ENCODE measurements at regions of chr3 and their contacts with region 1.

Region 1: DNA sequence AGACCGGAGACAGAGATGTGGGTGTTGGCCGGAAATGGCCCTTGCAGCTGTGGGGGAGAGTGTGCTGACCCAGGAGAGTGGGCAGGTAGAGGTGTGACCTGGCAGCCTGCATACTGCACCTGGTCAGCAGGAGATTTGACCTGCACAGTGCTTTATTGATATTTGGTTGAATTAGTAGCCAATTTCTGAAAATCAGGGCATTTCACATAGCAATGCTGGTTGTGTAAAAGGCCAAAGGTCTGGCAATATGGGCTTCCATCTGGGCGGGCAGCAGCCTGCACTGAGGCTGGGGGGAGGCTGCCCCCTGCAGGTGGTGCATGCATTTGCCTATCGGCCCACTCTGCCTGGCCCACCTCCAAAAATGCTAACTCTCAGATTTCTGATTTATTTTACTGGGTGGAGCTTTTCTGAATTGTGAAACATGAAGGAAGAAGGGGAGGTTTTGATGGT is 9.4 kb upstream of the MGLL start:
- DNase-seq: peak in 1 of 2 experiments; percentile 82
- H3K4me3 ChIP-seq: no peak overlapping the region
- H3K27ac ChIP-seq: no peak overlapping the region
- H3K4me1 ChIP-seq: no peaks in the 10 kb centered on the region
- H3K27me3 ChIP-seq: no peaks in the 10 kb centered on the region; a peak in 1 of 7 replicates
- CTCF ChIP-seq: peak; percentile 90 to 96 (median 94)
- EP300 ChIP-seq: no peak
- POLR2A ChIP-seq: no peak
- RAD21 ChIP-seq: peak; percentile 94 to 98

Region 2: DNA sequence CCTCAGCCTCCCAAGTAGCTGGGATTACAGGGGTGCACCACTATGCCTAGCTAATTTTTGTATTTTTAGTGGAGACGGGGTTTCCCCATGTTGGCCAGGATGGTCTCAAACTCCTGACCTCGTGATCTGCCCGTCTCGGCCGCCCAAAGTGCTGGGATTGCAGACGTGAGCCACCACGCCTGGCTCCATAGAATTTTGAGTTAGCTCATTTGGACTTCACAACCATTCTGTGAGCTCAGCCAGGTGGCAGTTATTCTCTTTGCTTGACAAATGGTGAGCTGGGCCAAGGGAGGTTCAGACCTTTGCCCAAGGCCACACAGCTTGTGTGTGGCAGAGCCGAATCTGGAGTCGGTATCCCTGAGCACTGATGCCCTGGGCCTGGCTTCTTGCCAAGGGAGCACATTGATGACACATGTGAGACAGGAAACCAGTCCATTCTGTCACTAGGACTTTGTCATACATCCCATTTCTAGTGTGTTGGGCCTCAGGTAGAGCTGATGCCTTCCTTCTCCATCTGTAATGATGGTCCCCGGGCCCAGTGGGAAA is 185.2 kb before region 1 on chr3:
- CTCF ChIA-PET with region 1: interaction called, 27 read pairs
- POLR2A ChIA-PET with region 1: no interaction called
- DNase-seq: no peak
- H3K4me3 ChIP-seq: no peak overlapping the region
- H3K27ac ChIP-seq: no peak overlapping the region
- H3K4me1 ChIP-seq: peaks cover 0 to 7% (median 2%) of the 10 kb centered on the region in 4 experiments; a peak in 3 of 7 replicates
- H3K27me3 ChIP-seq: no peaks in the 10 kb centered on the region
- CTCF ChIP-seq: no peak
- EP300 ChIP-seq: no peak
- POLR2A ChIP-seq: no peak
- RAD21 ChIP-seq: no peak

Region 3: DNA sequence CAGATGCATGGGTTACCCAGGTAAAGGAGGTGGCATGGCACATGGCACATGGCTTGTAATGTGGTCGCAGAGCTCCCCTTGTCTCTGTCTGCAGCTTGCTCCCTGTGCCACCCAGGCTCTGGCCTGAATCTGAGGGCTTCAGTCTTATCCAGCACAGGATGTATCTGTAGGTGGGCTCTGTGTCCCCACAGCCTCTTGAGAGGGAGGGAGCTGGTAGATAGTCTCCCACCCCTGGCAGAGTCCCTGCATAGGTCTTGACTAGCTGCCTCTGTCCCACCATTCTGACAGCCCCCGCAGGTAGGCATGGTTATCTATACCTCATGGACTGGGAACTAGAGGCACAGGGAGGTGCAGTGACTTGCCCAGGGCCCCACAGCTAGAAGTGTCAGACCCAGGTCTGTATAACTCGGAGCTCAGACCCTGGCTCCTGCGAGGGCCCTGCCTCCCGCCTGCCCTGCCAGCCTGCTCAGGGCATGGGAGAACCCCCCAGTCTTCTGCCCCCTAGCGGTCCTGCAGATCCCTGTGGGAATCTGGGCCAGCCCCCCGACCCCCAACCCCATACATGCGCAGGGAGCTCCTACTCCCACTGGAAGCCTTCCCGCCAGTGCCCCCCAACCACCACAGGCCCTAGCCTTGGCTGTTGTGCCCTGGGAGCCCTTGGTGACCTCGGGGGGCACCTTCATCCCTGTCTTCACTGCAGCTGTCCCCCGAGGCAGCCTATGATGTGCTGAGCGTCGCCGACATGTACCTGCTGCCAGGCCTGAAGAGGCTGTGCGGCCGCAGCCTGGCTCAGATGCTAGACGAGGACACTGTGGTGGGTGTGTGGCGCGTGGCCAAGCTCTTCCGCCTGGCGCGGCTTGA is 152.2 kb before region 1 on chr3:
- CTCF ChIA-PET with region 1: interaction called, 71 read pairs
- POLR2A ChIA-PET with region 1: no interaction called
- DNase-seq: peak in 1 of 2 experiments; percentile 82
- H3K4me3 ChIP-seq: no peak overlapping the region
- H3K27ac ChIP-seq: no peak overlapping the region
- H3K4me1 ChIP-seq: peaks cover 0 to 6% (median 4%) of the 10 kb centered on the region in 4 experiments; a peak in 4 of 7 replicates
- H3K27me3 ChIP-seq: no peaks in the 10 kb centered on the region
- CTCF ChIP-seq: peak in 2 of 3 experiments; percentile 65 to 73; a peak in 3 of 4 replicates
- EP300 ChIP-seq: no peak
- POLR2A ChIP-seq: no peak
- RAD21 ChIP-seq: peak; percentile 36 to 49; a peak in 3 of 4 replicates

Region 4: GRCh38 chr3:127750226-127751031 is 81.3 kb before region 1 on chr3:
- CTCF ChIA-PET with region 1: interaction called, 18 read pairs
- POLR2A ChIA-PET with region 1: no interaction called
- DNase-seq: no peak
- H3K4me3 ChIP-seq: no peak overlapping the region
- H3K27ac ChIP-seq: no peak overlapping the region
- H3K4me1 ChIP-seq: no peaks in the 10 kb centered on the region
- H3K27me3 ChIP-seq: no peaks in the 10 kb centered on the region
- CTCF ChIP-seq: no peak
- EP300 ChIP-seq: no peak
- POLR2A ChIP-seq: no peak
- RAD21 ChIP-seq: no peak

Region 5: GRCh38 chr3:127844326-127844942 is 12.7 kb after region 1 on chr3:
- CTCF ChIA-PET with region 1: interaction called, 13 read pairs
- POLR2A ChIA-PET with region 1: no interaction called
- DNase-seq: no peak
- H3K4me3 ChIP-seq: no peak overlapping the region
- H3K27ac ChIP-seq: no peak overlapping the region
- H3K4me1 ChIP-seq: peaks cover 0 to 3% (median 1%) of the 10 kb centered on the region in 4 experiments; a peak in 2 of 7 replicates
- H3K27me3 ChIP-seq: no peaks in the 10 kb centered on the region
- CTCF ChIP-seq: no peak
- EP300 ChIP-seq: no peak
- POLR2A ChIP-seq: no peak
- RAD21 ChIP-seq: no peak

Region 6: GRCh38 chr3:127860211-127860696 is 28.5 kb after region 1 on chr3:
- CTCF ChIA-PET with region 1: no interaction called
- POLR2A ChIA-PET with region 1: no interaction called
- DNase-seq: no peak
- H3K4me3 ChIP-seq: no peak overlapping the region
- H3K27ac ChIP-seq: no peak overlapping the region
- H3K4me1 ChIP-seq: peaks cover 0 to 3% (median 1%) of the 10 kb centered on the region in 4 experiments; a peak in 3 of 7 replicates
- H3K27me3 ChIP-seq: no peaks in the 10 kb centered on the region
- CTCF ChIP-seq: no peak
- EP300 ChIP-seq: no peak
- POLR2A ChIP-seq: no peak
- RAD21 ChIP-seq: no peak

Region 7: DNA sequence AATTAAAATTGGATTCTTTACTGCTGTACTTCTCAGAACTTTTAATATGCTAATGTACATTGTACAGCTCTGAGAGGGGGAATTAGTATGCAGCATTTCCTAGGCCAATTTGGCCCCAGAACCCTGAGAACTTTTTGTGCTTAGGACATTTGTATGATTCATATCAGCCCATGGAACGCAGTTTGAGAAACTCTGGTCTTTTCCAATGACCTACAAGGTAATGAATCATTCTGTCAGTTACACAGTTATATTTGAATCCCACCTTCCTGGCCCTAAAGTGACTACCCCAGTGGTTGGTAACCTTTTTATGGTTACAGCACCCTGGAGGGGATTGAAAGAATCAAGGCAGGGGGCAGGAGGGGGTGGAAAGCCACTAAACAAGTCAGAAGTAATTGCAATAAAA is 57.7 kb after region 1 on chr3:
- CTCF ChIA-PET with region 1: interaction called, 10 read pairs
- POLR2A ChIA-PET with region 1: no interaction called
- DNase-seq: no peak
- H3K4me3 ChIP-seq: no peak overlapping the region
- H3K27ac ChIP-seq: no peak overlapping the region
- H3K4me1 ChIP-seq: peaks cover 0 to 5% (median 1%) of the 10 kb centered on the region in 4 experiments; a peak in 3 of 7 replicates
- H3K27me3 ChIP-seq: no peaks in the 10 kb centered on the region; a peak in 1 of 7 replicates
- CTCF ChIP-seq: no peak
- EP300 ChIP-seq: no peak
- POLR2A ChIP-seq: no peak
- RAD21 ChIP-seq: no peak

Region 8: GRCh38 chr3:128052595-128053351 is 221.0 kb after region 1 on chr3:
- CTCF ChIA-PET with region 1: no interaction called
- POLR2A ChIA-PET with region 1: no interaction called
- DNase-seq: no peak
- H3K4me3 ChIP-seq: peak overlapping the region; percentile 82 to 92 (median 86)
- H3K27ac ChIP-seq: 0 out of 2 replicates have a peak overlapping the region, but pooled peaks have one; percentile 35
- H3K4me1 ChIP-seq: peaks cover 0 to 7% (median 2%) of the 10 kb centered on the region in 4 experiments; a peak in 4 of 7 replicates
- H3K27me3 ChIP-seq: no peaks in the 10 kb centered on the region
- CTCF ChIP-seq: no peak
- EP300 ChIP-seq: no peak
- POLR2A ChIP-seq: no peak
- RAD21 ChIP-seq: no peak

Measured in H1 (cell line).